Caco-2 (cell line): ENCODE measurements at regions of chr20 and their contacts with region 1.

Region 1: GRCh38 chr20:50460460-50461267 is 49.5 kb upstream of the PTPN1 start:
- DNase-seq: peak; percentile 93 to 96
- H3K4me3 ChIP-seq: no peak overlapping the region
- H3K4me3 Mint-ChIP-seq: no peak overlapping the region
- H3K27ac Mint-ChIP-seq: peak overlapping the region; percentile 34
- H3K4me1 ChIP-seq: peaks cover 33% of the 10 kb centered on the region
- H3K4me1 Mint-ChIP-seq: peaks cover 31% of the 10 kb centered on the region
- H3K27me3 ChIP-seq: no peaks in the 10 kb centered on the region
- H3K27me3 Mint-ChIP-seq: no peaks in the 10 kb centered on the region
- CTCF ChIP-seq: peak; percentile 99 to 100

Region 2: DNA sequence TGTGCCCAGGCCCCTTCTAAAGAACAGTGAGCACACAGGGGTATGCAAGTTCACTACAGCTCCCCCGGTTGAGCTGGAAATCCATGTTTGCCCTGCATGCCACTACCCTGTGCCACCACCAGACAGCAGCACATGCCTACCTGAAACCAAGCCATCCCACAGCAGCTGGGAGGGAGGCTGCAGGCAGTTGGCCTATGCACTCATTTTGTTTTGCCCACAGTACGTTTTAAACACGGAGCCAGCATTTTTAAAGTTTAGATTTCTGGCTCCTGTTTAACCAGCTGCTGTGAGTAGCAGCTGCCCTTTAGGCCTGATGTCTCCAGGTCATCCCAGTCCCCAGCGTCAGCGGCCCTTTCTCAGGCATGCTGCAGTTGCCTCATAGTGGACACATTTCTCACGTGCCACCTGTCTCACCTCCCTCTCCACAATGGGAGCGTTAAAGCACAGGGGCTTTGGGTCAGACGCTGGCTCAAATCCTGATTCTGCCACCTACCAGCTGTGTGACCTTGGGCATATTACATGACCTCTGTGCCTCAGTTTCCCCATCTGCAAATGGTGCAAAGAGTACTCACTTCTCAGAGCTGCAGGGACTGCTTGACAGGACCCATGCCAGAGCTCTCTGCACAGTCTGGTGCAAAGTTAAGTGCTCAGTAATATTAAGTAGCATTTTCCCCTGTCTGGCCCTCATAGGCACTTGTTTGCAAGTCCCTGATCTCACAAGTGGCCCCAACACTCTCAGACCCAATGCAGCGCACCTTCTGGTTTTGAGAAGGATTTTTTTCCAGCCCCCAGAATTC is 339.6 kb before region 1 on chr20:
- CTCF ChIA-PET with region 1: interaction called, 5 read pairs
- POLR2A ChIA-PET with region 1: no interaction called
- intact Hi-C with region 1: loop called (anchors 5 kb)
- DNase-seq: peak; percentile 86 to 88
- H3K4me3 ChIP-seq: no peak overlapping the region
- H3K4me3 Mint-ChIP-seq: no peak overlapping the region
- H3K27ac Mint-ChIP-seq: peak overlapping the region; percentile 27
- H3K4me1 ChIP-seq: peaks cover 15% of the 10 kb centered on the region
- H3K4me1 Mint-ChIP-seq: peaks cover 18% of the 10 kb centered on the region
- H3K27me3 ChIP-seq: no peaks in the 10 kb centered on the region
- H3K27me3 Mint-ChIP-seq: no peaks in the 10 kb centered on the region
- CTCF ChIP-seq: peak; percentile 98 to 99

Region 3: DNA sequence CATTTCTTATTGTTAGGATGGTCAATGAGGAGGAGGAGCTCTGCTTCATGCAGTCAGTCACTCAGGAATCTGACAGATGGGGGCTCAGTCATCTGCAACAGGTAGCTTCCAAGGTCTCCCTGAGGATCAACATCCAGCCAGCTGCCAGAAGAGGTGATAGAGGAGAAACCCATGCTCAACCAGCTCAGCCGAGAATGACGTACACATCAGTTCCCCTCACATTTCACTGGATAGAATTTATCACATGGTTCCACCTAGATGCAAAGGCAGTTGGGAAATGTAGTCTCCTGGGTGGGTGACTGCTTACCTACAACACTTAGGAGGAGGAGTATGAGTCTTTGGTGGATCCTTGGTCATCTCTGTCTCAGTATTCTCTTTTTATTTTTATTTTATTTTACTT is 125.6 kb before region 1 on chr20:
- CTCF ChIA-PET with region 1: interaction called, 5 read pairs
- POLR2A ChIA-PET with region 1: no interaction called
- intact Hi-C with region 1: loop called (anchors 1 kb)
- DNase-seq: peak; percentile 87 to 91
- H3K4me3 ChIP-seq: no peak overlapping the region
- H3K4me3 Mint-ChIP-seq: no peak overlapping the region
- H3K27ac Mint-ChIP-seq: no peak overlapping the region
- H3K4me1 ChIP-seq: peaks cover 8% of the 10 kb centered on the region
- H3K4me1 Mint-ChIP-seq: peaks cover 4% of the 10 kb centered on the region
- H3K27me3 ChIP-seq: no peaks in the 10 kb centered on the region
- H3K27me3 Mint-ChIP-seq: no peaks in the 10 kb centered on the region
- CTCF ChIP-seq: no peak

Region 4: GRCh38 chr20:50385733-50386640 is 74.7 kb before region 1 on chr20:
- CTCF ChIA-PET with region 1: interaction called, 9 read pairs
- POLR2A ChIA-PET with region 1: interaction called, 3 read pairs
- intact Hi-C with region 1: loop called (anchors 1 kb)
- DNase-seq: no peak
- H3K4me3 ChIP-seq: no peak overlapping the region
- H3K4me3 Mint-ChIP-seq: no peak overlapping the region
- H3K27ac Mint-ChIP-seq: peak overlapping the region; percentile 10
- H3K4me1 ChIP-seq: peaks cover 59% of the 10 kb centered on the region
- H3K4me1 Mint-ChIP-seq: peaks cover 61% of the 10 kb centered on the region
- H3K27me3 ChIP-seq: no peaks in the 10 kb centered on the region
- H3K27me3 Mint-ChIP-seq: no peaks in the 10 kb centered on the region
- CTCF ChIP-seq: no peak

Region 5: DNA sequence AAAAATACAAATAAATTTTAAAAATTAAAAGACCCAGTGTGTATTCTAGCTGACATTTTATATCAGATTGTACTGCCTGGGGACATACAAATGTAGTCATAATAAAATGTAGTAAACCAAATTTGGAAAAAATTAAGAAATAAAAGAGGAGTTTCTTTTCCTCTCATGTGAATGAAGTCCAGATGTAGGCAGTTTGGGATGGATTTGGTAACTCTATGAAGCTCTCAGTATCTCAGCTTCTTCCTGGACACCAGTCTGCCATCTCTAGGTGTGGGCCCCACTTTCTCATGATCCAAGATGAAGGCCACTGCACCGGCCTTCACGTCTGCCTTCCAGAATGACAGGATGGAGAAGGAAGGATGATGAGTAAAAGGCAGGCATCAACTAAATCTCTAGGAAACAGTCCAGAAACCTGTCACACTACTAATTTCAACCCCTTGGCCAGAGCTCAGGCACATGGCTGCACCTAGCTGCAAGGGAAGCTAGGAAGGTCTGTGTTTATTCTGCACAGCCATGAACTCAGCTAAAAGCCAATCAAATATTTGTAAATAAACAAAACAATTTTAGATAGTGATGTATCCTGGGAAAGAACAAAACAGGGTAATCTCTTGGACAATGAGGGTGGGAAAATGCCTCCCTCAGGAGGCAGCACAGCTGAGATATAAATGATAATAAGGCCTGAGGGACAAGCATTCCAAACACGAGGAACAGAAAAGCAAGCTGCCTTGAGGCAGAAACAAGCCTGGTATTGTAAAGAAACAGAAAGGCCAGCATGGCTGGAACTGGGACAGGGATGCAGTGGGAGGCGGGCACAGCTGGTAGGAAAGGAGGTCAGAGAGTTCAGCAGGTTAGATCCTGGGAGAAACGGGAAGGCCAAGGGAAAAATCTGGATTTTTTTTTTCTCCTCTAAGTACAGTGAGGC is 39.0 kb before region 1 on chr20:
- CTCF ChIA-PET with region 1: interaction called, 3 read pairs
- POLR2A ChIA-PET with region 1: no interaction called
- intact Hi-C with region 1: loop called (anchors 2 kb)
- DNase-seq: no peak
- H3K4me3 ChIP-seq: no peak overlapping the region
- H3K4me3 Mint-ChIP-seq: no peak overlapping the region
- H3K27ac Mint-ChIP-seq: peak overlapping the region; percentile 76
- H3K4me1 ChIP-seq: peaks cover 37% of the 10 kb centered on the region
- H3K4me1 Mint-ChIP-seq: peaks cover 27% of the 10 kb centered on the region
- H3K27me3 ChIP-seq: no peaks in the 10 kb centered on the region
- H3K27me3 Mint-ChIP-seq: no peaks in the 10 kb centered on the region
- CTCF ChIP-seq: no peak